ENCODE measurements at regions of chr1 and their contacts with region 1.

Region 1: GRCh38 chr1:92485381-92486257 is 1.1 kb downstream of the GFI1 start:
- DNase-seq: peak; percentile 90
- H3K4me3 Mint-ChIP-seq: peak overlapping the region; percentile 85
- H3K27ac Mint-ChIP-seq: peak overlapping the region; percentile 92
- H3K4me1 Mint-ChIP-seq: peaks cover 45% of the 10 kb centered on the region
- H3K27me3 Mint-ChIP-seq: no peaks in the 10 kb centered on the region

Region 2: GRCh38 chr1:92298573-92299476 is 186.8 kb before region 1 on chr1 and contains the starts of genes GLMN and RPAP2:
- CTCF ChIA-PET with region 1: interaction called, 10 read pairs
- POLR2A ChIA-PET with region 1: interaction called, 61 read pairs
- DNase-seq: peak; percentile 77
- H3K4me3 Mint-ChIP-seq: peak within 1 kb of the TSS; percentile 83
- H3K27ac Mint-ChIP-seq: peak within 1 kb of the TSS; percentile 81
- H3K4me1 Mint-ChIP-seq: peaks cover 49% of the 10 kb centered on the region
- H3K27me3 Mint-ChIP-seq: no peaks in the 10 kb centered on the region
- total RNA-seq, gene GLMN: 18.2 to 18.7 TPM
- total RNA-seq, gene RPAP2: 31.6 to 36.5 TPM

Region 3: DNA sequence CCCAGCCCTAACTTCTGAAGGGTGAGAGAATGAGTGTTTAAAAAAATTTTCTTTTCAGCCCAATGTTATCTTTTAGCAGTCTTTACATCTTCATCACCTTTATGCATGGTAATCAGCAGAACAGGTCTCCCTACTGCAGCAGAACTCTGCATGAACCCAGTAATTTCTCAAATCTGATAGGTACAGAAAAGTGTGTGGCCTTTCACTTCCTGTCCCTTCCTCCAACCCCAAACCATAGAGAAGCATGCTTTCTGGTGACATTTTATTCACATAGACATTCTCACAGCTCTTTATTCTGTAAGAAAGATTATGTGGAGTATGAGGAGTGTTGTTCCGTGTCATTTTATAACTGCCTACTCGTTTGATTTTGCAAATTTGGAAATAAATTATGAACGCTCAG is 118.1 kb before region 1 on chr1:
- CTCF ChIA-PET with region 1: interaction called, 6 read pairs
- POLR2A ChIA-PET with region 1: interaction called, 10 read pairs
- DNase-seq: no peak
- H3K4me3 Mint-ChIP-seq: no peak overlapping the region
- H3K27ac Mint-ChIP-seq: peak overlapping the region; percentile 62
- H3K4me1 Mint-ChIP-seq: peaks cover 51% of the 10 kb centered on the region
- H3K27me3 Mint-ChIP-seq: no peaks in the 10 kb centered on the region

Region 4: DNA sequence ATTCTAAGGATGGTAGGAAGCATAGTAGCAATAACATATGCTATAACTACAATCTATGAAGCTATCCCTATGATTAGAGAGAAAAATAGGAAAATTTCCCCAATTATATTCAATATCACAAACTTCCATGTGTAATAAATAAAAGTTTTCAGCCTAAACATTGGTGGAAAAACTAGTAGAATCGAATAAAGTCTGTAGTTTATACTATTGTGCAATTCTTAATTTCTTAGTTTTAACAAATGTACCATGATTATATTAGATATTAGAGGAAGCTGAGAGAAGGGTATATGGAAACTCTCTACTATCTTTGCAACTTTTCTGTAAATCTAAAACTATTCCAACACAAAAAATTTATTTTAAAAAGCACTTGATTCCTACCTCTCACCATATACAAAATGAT is 14.9 kb after region 1 on chr1:
- CTCF ChIA-PET with region 1: interaction called, 5 read pairs
- POLR2A ChIA-PET with region 1: interaction called, 26 read pairs
- DNase-seq: no peak
- H3K4me3 Mint-ChIP-seq: no peak overlapping the region
- H3K27ac Mint-ChIP-seq: no peak overlapping the region
- H3K4me1 Mint-ChIP-seq: peaks cover 38% of the 10 kb centered on the region
- H3K27me3 Mint-ChIP-seq: no peaks in the 10 kb centered on the region

Region 5: GRCh38 chr1:92563457-92564216 is 78.0 kb after region 1 on chr1:
- CTCF ChIA-PET with region 1: interaction called, 7 read pairs
- POLR2A ChIA-PET with region 1: interaction called, 18 read pairs
- DNase-seq: no peak
- H3K4me3 Mint-ChIP-seq: no peak overlapping the region
- H3K27ac Mint-ChIP-seq: peak overlapping the region; percentile 63
- H3K4me1 Mint-ChIP-seq: peaks cover 42% of the 10 kb centered on the region
- H3K27me3 Mint-ChIP-seq: no peaks in the 10 kb centered on the region

Region 6: GRCh38 chr1:92583821-92584760 is 98.5 kb after region 1 on chr1:
- CTCF ChIA-PET with region 1: interaction called, 16 read pairs
- POLR2A ChIA-PET with region 1: interaction called, 233 read pairs
- DNase-seq: no peak
- H3K4me3 Mint-ChIP-seq: peak overlapping the region; percentile 67
- H3K27ac Mint-ChIP-seq: peak overlapping the region; percentile 92
- H3K4me1 Mint-ChIP-seq: peaks cover 62% of the 10 kb centered on the region
- H3K27me3 Mint-ChIP-seq: no peaks in the 10 kb centered on the region

Measured in activated CD4-positive, alpha-beta memory T cell treated with anti-CD3 and anti-CD28 coated beads, Interleukin-2, amount 10 ng/mL, durations not matched to agents 7 days and 5 days (primary cell).